GM10248 (cell line): ENCODE measurements at regions of chr11 and their contacts with region 1.

Region 1: GRCh38 chr11:61947486-61948210 is 2.5 kb upstream of the BEST1 start:
- DNase-seq: peak; percentile 87
- CTCF ChIP-seq: peak; percentile 94

Region 2: DNA sequence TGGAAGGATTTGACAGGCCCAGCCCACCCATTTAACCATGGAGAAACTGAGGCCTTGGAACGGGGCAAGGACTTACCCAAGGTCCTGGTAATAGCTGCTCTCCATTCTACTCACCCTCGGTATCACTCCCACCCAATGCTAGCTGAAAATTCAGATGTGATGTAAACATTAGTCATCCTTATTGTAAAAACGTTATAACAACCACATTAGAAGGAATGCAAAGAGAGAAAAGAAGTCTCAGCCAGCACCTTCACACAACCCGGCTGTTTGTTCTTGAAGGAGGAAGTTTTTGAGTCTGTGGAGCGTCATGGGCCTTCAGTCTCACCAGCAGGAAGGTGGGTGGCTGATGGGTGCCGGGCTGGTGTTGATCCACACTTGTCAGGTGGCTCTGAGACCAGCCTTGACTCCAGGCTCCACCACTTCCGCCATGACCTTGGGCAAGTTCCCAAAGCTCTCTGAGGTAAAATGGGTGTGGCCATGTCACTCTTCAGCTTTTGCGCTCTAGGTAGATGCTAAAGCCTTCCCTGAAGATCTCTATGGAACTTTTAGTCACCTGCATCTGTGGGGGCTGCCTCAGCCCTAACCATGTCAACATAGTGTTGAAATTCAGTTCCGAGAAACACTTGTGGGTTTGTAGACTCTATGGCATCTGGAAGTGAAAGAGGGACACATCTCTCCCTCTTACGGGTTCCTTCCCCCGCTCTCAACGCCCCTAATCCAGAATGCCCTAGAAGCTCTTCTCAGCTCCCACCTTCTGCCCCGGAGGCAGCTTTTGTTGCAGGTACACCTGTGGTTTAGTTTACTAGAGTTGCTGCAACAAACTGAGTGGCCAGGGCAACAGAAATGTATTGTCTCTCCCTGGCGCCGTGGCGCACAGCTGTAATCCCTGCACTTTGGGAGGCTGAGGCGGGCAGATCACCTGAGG is 961.4 kb before region 1 on chr11:
- CTCF ChIA-PET with region 1: no interaction called
- POLR2A ChIA-PET with region 1: no interaction called
- DNase-seq: no peak
- CTCF ChIP-seq: no peak

Region 3: DNA sequence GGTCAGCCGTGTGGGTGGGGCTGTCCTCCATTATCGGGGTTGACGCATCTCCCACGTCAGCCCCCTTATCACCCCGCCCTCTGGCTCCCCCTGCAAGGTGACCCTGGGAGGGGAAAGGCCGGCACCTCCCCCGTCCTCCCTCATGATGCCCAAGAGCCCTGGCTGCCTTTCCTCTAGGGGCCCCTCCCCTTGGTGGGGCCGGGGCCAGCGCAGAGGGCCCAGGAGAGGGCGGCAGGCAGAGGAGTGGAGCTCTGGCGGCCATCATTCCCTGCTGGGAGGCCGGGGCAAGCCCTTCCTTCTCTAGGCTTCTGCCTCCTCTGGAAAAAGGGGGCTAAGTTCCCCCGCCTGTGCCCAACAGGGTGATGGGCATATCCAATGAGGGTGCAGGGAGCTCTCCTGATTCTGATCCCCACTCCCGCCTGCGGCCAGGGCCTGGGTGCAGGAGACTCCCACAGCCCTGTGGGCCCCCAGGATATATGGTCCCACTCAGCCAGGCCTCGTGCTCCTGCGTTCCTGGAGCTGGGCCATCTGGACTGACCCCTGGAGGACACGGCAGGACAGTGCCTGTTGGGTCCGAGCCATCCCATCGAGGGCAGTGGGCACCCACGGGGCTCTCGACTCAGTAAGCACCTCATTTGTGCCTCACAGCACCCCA is 182.9 kb before region 1 on chr11:
- CTCF ChIA-PET with region 1: no interaction called
- POLR2A ChIA-PET with region 1: no interaction called
- DNase-seq: no peak
- CTCF ChIP-seq: no peak

Region 4: GRCh38 chr11:61792310-61793085 is 155.2 kb before region 1 on chr11 and contains the starts of genes FEN1 and TMEM258:
- CTCF ChIA-PET with region 1: interaction called, 129 read pairs
- POLR2A ChIA-PET with region 1: interaction called, 4 read pairs
- DNase-seq: peak; percentile 93
- CTCF ChIP-seq: no peak

Region 5: DNA sequence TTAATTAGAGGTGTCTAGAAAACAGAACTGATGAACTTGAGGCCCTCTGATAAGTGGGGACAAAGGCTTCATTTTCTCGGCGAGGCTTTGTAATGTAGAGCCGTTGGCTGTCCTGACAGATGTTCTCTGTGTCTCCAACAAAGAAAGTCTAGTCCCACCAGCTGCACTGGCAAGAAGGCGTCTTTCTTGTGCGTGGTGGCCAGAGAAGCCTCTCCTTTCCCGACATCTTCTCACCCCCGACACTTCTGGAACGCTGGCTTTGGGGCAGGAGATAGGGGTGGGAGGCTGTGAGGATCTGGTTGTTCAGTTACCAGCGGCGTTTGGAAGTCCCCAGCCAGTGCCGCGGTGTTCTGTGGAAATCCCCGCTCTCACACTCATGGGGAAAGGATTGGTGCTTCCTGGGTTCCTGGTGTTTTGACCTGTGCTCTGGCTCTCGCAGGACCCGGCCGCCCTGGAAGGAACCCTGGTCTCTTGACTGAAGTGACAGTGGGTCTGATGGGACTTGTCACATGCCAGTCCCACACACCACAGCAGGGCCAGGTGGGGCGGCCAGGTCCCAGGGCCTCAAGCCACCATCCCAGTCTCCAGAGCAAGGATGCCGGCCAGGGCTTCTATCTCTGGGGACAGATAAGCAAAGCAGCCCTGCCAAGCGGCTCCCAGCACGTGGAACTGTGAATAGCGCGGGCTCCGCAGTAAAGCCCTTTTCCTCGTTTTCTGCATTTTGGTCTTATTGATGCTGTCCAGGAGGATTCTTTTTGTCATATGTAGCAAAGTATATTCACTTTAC is 96.3 kb before region 1 on chr11:
- CTCF ChIA-PET with region 1: no interaction called
- POLR2A ChIA-PET with region 1: no interaction called
- DNase-seq: no peak
- CTCF ChIP-seq: no peak

Region 6: DNA sequence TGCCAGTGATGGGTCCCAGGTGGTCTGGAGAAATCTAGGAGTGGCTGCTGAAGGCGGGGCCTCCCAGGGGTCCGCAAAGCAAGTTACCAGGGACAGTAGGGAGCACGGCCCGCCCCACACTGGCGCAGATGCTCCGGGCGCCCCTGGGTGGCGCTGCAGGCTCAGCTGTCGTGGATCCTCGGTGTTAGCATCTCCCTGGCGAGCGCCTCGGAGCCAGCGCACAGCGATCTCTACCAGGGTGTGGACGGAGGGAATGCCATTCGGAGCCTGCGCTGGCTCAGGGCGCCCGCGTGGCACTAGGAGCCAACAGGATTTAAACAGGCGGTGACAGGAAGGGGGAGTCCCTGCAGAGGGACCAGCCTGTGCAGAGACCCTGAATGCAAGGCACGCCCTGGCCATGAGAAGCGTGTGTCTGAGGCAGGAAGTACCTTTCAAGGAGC is 76.5 kb before region 1 on chr11:
- CTCF ChIA-PET with region 1: interaction called, 15 read pairs
- POLR2A ChIA-PET with region 1: no interaction called
- DNase-seq: peak; percentile 87
- CTCF ChIP-seq: peak; percentile 93

Region 7: GRCh38 chr11:61912530-61912898 is 35.1 kb before region 1 on chr11:
- CTCF ChIA-PET with region 1: interaction called, 10 read pairs
- POLR2A ChIA-PET with region 1: interaction called, 3 read pairs
- DNase-seq: no peak
- CTCF ChIP-seq: no peak

Region 8: DNA sequence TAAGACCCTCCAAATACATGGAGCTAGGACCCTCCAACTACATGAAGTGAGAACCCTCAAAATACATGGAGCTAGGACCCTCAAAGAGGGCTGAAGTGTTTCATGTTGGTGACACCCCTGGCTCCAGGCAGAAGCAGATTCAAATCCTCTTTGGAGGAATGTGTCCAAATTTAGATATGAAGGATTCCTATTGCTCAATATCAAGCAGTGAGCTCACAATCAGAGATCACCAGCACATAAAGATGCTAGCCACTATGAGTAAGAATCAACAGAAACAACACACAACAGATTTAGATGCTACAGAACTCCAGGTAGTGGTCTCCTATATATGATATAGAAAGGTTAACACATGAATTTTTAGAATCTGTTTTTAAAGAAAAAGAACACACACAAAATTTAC is 19.0 kb before region 1 on chr11:
- CTCF ChIA-PET with region 1: interaction called, 21 read pairs
- POLR2A ChIA-PET with region 1: no interaction called
- DNase-seq: no peak
- CTCF ChIP-seq: no peak

Region 9: GRCh38 chr11:61967116-61967923 is 19.7 kb after region 1 on chr11 and contains the start of gene FTH1:
- CTCF ChIA-PET with region 1: interaction called, 39 read pairs
- POLR2A ChIA-PET with region 1: interaction called, 3 read pairs
- DNase-seq: peak; percentile 94
- CTCF ChIP-seq: no peak

Region 10: GRCh38 chr11:61985885-61986345 is 38.3 kb after region 1 on chr11:
- CTCF ChIA-PET with region 1: interaction called, 13 read pairs
- POLR2A ChIA-PET with region 1: no interaction called
- DNase-seq: no peak
- CTCF ChIP-seq: no peak